ENCODE measurements at regions of chr1 and their contacts with region 1.

Region 1: DNA sequence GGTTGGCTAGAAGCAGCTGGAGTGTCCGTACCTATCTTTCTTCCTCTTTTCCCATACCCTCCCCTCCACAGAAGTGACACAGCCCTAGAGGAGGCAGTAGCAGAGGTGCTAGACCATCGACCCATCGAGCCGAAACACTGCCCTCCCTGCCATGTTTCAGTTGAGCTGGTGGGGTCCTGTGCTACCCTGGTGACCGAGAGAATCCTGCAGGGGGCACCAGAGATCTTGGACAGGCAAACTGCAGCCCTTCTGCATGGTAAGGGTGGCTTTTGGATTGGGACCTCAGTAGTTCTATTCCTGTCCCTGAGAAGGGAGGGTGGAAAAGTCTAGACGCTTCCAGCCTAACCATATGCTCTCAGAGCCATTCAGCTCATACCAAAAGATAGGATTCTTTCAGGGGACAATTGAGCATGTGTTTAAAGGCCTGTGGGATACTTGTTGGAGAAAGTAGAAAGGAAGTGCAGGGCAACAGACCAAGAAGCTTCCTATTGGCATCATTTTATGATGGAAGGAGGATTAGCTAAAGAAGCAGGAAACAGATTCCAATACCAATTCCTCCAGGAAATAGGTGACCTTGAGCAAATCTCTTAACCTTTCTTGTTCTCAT is 11.7 kb upstream of the BNIPL start:
- DNase-seq: peak; percentile 75
- ATAC-seq: peak; percentile 91
- H3K4me3 ChIP-seq: no peak overlapping the region
- H3K27ac ChIP-seq: no peak overlapping the region
- H3K4me1 ChIP-seq: no peaks in the 10 kb centered on the region
- H3K27me3 ChIP-seq: no peaks in the 10 kb centered on the region
- CTCF ChIP-seq: peak; percentile 95

Region 2: DNA sequence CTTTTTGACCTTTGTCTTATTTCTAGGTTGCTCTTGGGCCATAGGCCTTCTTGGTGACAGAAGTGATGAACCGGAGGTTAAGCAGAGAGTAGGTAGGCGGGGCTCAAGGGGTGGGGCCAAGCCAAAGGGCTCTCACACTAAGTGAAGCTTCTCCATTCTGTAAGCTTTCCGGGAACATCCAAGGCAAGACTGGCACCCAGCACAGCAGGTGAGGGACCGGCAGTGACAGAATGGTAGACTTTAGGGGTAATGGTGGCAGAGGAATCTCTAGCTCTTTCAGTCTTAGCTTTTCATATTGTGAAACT is 131.8 kb after region 1 on chr1 and contains the start of gene TNFAIP8L2:
- CTCF ChIA-PET with region 1: no interaction called
- POLR2A ChIA-PET with region 1: no interaction called
- intact Hi-C with region 1: loop called (anchors 10 kb)
- DNase-seq: no peak
- ATAC-seq: peak; percentile 81
- H3K4me3 ChIP-seq: no peak within 1 kb of the TSS
- H3K27ac ChIP-seq: no peak within 1 kb of the TSS
- H3K4me1 ChIP-seq: no peaks in the 10 kb centered on the region
- H3K27me3 ChIP-seq: no peaks in the 10 kb centered on the region
- CTCF ChIP-seq: no peak
- total RNA-seq, gene TNFAIP8L2: not detected in 2 replicates

Measured in PC-3 (cell line).